ENCODE measurements at regions of chr19 and their contacts with region 1.

Region 1: DNA sequence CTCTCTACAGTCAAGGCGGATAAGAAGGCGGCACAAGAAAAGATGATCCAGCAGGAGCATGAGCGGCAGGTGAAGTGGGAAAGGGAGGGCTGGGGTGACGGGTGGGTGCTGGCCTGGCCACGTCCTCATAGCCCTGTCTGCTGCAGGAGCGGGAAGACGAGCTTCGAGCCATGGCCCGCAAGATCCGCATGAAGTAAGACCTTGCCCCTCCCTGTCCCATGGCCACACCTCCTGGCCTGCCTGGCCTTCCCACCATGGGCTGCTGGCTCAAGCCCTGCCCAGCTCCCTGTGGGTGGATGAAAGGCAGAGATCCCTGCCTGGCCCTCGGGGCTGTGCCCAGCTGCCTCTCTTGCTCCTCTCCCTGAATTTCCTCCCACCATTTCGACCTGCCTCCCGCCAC is 7.2 kb downstream of the ZNF296 start:
- DNase-seq: no peak
- ATAC-seq: no peak
- H3K4me3 ChIP-seq: no peak overlapping the region
- H3K4me3 Mint-ChIP-seq: no peak overlapping the region
- H3K27ac ChIP-seq: no peak overlapping the region
- H3K27ac Mint-ChIP-seq: no peak overlapping the region
- H3K4me1 ChIP-seq: no peaks in the 10 kb centered on the region
- H3K4me1 Mint-ChIP-seq: no peaks in the 10 kb centered on the region
- H3K27me3 ChIP-seq: no peaks in the 10 kb centered on the region
- H3K27me3 Mint-ChIP-seq: no peaks in the 10 kb centered on the region

Region 2: DNA sequence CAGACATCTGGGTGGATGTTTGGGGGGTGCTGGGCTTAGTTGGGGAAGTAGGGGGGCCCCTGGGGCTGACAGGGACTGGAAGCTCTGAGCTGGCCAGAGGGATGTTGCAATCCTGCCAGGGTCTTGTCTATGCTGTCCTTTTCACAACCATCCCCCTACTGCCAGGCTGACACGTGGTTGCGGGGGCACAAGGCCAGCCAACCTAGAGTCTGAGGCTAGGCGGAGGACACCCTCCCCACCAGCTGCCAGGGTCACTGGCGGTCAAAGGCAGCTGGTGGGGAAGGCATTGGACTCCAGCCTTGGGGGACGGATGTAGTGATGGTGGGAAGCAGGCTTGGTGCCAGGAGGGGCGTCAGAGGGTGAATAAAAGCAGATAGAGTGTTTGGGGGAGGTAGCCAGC is 156.2 kb before region 1 on chr19:
- CTCF ChIA-PET with region 1: no interaction called
- POLR2A ChIA-PET with region 1: interaction called in 1 of 2 experiments, 12 read pairs
- DNase-seq: no peak
- ATAC-seq: no peak
- H3K4me3 ChIP-seq: no peak overlapping the region
- H3K4me3 Mint-ChIP-seq: peak overlapping the region in 1 of 3 donors; percentile 9
- H3K27ac ChIP-seq: no peak overlapping the region
- H3K27ac Mint-ChIP-seq: peak overlapping the region in 1 of 2 donors; percentile 50
- H3K4me1 ChIP-seq: peaks cover 0 to 13% of the 10 kb centered on the region in 2 experiments
- H3K4me1 Mint-ChIP-seq: peaks cover 9 to 12% (median 9%) of the 10 kb centered on the region in 3 donors
- H3K27me3 ChIP-seq: peaks cover 0 to 51% of the 10 kb centered on the region in 2 experiments
- H3K27me3 Mint-ChIP-seq: peaks cover 25 to 39% of the 10 kb centered on the region in 2 donors

Region 3: DNA sequence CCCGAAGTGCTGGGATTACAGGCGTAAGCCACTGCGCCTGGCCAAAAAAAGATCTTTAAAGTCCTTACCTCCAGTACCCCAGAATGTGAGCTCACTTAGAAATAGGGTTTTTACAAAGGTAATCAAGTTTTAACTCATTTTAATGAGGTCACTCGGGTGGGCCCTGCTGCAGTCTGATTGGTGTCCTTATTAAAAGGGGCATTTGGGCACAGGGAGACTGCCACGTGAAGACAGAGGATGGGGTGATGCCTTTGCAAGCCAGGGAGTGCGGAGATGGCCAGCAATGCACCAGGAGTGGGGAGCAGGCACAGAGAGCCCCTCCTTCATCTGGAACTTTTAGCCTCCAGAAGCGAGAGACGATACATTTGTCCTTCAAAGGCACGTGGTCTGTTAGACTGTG is 80.1 kb after region 1 on chr19:
- CTCF ChIA-PET with region 1: no interaction called
- POLR2A ChIA-PET with region 1: interaction called in 1 of 2 experiments, 15 read pairs
- DNase-seq: no peak
- ATAC-seq: no peak
- H3K4me3 ChIP-seq: no peak overlapping the region
- H3K4me3 Mint-ChIP-seq: no peak overlapping the region
- H3K27ac ChIP-seq: no peak overlapping the region
- H3K27ac Mint-ChIP-seq: peak overlapping the region; percentile 39 to 58
- H3K4me1 ChIP-seq: peaks cover 0 to 34% of the 10 kb centered on the region in 2 experiments
- H3K4me1 Mint-ChIP-seq: peaks cover 21 to 23% (median 22%) of the 10 kb centered on the region in 3 donors
- H3K27me3 ChIP-seq: peaks cover 0 to 23% of the 10 kb centered on the region in 2 experiments
- H3K27me3 Mint-ChIP-seq: peaks cover 0 to 14% of the 10 kb centered on the region in 2 donors

Measured in T-cell (primary cell).